Dendritic cell treated with granulocyte-macrophage colony-stimulating factor and Interleukin-4, amounts not matched to agents 40 ng/mL and 50 ng/mL, for 4 days (primary cell): ENCODE measurements at regions of chr19 and their contacts with region 1.

Region 1: DNA sequence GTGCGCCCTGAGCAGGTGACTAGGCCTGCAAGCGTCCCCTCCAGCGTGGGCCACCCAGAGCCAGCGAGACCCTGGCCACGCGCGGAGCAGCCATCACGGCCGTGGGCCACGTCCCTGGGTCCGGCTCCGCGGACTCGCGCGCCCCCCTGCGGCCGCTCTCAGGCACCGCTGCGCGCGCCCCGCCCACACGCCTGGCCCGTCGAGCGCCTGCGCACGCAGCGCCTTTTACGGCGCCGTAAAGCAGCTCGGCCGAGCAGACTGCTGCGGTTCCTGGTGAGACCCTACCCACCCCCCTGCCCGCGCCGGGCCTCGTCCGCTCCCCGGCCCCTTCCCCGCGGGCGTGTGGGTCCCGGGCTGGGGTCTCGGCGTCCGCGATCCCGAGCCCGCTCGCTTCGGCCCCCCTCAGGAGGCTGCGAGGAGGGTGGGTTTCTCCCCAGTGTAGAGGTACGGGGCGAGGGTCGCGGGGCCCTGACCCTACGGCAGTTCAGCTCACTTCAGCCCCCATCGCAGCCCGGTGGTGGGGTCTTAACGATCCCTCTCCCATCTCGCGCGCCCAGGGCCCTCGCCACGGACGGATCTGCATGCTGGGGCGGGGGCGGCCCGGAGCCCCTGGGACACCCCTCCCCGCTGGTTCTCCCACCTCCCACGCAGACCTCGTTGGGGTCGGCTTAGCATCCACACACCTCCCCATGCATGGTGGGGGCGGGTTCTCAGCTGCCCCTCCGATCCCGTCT is at the start of gene TRAPPC5:
- H3K4me3 Mint-ChIP-seq: peak within 1 kb of the TSS; percentile 98
- H3K27ac Mint-ChIP-seq: peak within 1 kb of the TSS; percentile 96
- H3K4me1 Mint-ChIP-seq: peaks cover 72% of the 10 kb centered on the region
- H3K27me3 Mint-ChIP-seq: no peaks in the 10 kb centered on the region

Region 2: DNA sequence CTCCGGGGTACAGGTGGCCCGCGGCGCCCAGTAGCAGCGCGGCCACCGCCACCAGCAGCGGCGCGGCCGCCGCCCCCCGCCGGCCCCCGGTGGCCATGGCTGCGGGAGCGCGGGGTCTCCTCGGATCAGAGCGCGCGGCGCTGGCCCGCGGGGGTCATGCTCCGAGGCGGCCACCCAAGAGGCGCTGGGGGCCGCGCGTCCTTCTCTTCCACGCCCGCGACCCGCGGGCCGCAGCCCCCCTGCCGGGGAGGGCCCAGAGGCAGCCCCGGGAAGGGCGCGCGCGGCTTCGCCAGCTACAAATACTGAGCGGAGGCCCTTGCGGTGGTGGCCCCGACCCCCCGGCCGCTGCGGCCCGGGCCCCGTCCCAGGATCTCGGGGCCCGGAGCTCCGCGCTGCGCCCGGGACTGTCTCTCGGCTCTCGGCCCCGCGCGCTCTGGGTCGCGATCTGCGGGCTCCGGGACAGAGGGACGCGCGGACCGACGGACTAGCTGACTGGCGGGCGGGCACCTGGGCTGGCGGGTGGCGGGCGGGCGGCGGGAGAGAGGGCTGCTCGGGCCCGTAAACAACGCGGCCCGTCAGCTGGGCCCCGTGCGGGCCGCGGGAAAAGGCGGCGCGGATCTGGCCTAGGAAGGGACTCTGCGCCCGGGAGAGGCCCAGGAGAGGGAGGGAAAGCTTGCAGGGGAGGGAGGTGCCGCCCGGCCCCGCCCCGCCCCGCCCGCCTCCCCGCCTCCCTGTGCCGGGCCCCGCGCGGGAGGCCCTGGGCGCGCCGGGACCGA is 386.8 kb before region 1 on chr19 and contains the start of gene INSR:
- intact Hi-C with region 1: no loop called
- H3K4me3 Mint-ChIP-seq: peak within 1 kb of the TSS; percentile 81
- H3K27ac Mint-ChIP-seq: peak within 1 kb of the TSS; percentile 77
- H3K4me1 Mint-ChIP-seq: peaks cover 33% of the 10 kb centered on the region
- H3K27me3 Mint-ChIP-seq: peaks cover 5% of the 10 kb centered on the region

Region 3: GRCh38 chr19:7562646-7563393 is 118.0 kb before region 1 on chr19:
- intact Hi-C with region 1: loop called (anchors 1 kb)
- H3K4me3 Mint-ChIP-seq: no peak overlapping the region
- H3K27ac Mint-ChIP-seq: no peak overlapping the region
- H3K4me1 Mint-ChIP-seq: peaks cover 11% of the 10 kb centered on the region
- H3K27me3 Mint-ChIP-seq: no peaks in the 10 kb centered on the region

Region 4: GRCh38 chr19:7652061-7652641 is 28.6 kb before region 1 on chr19:
- intact Hi-C with region 1: loop called (anchors 1 kb)
- H3K4me3 Mint-ChIP-seq: peak overlapping the region; percentile 55
- H3K27ac Mint-ChIP-seq: peak overlapping the region; percentile 75
- H3K4me1 Mint-ChIP-seq: peaks cover 42% of the 10 kb centered on the region
- H3K27me3 Mint-ChIP-seq: peaks cover 2% of the 10 kb centered on the region

Region 5: GRCh38 chr19:7748770-7749209 is 68.0 kb after region 1 on chr19:
- intact Hi-C with region 1: no loop called
- H3K4me3 Mint-ChIP-seq: no peak overlapping the region
- H3K27ac Mint-ChIP-seq: peak overlapping the region; percentile 25
- H3K4me1 Mint-ChIP-seq: peaks cover 66% of the 10 kb centered on the region
- H3K27me3 Mint-ChIP-seq: peaks cover 5% of the 10 kb centered on the region

Region 6: DNA sequence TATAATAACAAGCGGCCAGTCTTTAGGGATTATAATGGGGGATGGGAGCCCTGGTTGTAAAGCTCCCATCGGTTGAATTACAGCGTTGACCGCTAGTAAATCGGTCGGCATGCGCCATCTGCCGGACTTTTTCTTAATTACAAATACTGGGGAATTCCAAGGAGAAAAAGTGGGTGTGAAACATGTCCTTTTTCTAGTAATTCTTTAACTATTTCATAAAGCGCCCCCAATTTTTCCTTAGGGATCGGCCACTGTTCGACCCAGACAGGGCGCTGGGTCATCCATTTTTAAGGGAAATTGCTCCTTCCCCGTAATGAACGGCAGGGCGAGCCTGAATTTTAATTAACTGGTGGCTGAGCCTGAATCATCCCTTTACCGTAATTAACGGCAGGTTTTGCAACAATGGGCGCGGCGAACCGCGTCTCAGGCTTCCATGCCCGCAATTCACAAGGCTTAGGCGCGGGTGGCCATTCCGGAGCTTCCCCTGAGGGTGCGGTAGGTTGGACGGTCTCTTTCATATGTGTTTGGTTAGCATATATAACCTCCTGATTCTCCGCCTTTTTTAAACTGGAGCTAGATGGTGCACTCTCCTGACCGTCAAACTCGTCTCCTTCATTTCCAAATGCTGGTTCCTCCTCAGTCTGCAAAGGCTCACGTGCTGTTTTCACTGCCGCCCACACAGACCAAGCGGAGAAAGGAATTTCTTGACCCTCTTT is 119.0 kb after region 1 on chr19:
- intact Hi-C with region 1: loop called (anchors 1 kb)
- H3K4me3 Mint-ChIP-seq: peak overlapping the region; percentile 67
- H3K27ac Mint-ChIP-seq: peak overlapping the region; percentile 78
- H3K4me1 Mint-ChIP-seq: peaks cover 12% of the 10 kb centered on the region
- H3K27me3 Mint-ChIP-seq: peaks cover 3% of the 10 kb centered on the region

Region 7: DNA sequence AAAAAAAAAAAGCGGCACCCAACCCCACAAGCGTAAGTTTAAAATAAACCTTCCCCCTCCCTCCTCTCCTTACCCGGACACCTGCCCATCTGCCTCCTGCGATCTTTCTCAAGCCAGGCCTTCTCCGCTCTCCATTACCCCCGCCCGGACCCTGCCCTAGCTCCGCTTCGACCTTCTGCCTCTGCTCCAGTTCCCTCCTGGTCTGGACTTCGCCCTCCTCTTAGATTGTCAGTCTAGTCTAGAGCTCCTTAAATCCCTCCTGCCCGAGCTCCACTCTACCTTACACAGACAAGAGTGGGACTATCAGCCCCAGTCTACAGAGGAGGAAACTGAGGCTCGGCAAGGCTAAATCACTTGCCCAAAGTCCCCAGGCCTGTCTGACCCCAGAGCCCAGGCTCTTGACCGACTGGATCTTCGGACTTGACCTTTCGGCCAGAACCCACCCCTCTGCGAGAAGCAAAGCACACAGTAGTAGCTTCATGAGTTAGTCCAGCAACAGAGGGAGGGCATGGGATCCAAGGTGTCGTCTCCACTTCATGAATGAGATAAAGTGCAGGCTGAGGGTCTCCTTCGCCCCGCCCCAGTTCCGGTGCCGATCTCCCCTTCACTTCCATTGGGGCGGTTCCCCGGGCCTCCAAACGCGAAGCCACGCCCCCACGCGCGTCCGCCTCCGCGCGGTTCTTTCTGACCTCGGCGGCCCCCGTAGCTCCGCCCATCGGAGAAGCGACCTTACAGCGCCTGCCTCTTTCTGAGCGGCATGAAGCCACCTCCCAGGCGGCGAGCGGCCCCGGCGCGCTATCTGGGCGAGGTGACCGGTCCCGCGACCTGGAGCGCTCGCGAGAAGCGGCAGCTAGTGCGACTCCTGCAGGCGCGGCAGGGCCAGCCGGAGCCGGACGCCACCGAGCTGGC is 239.1 kb after region 1 on chr19 and contains the start of gene SNAPC2:
- intact Hi-C with region 1: loop called (anchors 10 kb)
- H3K4me3 Mint-ChIP-seq: peak within 1 kb of the TSS; percentile 87
- H3K27ac Mint-ChIP-seq: peak within 1 kb of the TSS; percentile 94
- H3K4me1 Mint-ChIP-seq: peaks cover 82% of the 10 kb centered on the region
- H3K27me3 Mint-ChIP-seq: peaks cover 66% of the 10 kb centered on the region